ENCODE measurements at regions of chr16 and their contacts with region 1.

Region 1: DNA sequence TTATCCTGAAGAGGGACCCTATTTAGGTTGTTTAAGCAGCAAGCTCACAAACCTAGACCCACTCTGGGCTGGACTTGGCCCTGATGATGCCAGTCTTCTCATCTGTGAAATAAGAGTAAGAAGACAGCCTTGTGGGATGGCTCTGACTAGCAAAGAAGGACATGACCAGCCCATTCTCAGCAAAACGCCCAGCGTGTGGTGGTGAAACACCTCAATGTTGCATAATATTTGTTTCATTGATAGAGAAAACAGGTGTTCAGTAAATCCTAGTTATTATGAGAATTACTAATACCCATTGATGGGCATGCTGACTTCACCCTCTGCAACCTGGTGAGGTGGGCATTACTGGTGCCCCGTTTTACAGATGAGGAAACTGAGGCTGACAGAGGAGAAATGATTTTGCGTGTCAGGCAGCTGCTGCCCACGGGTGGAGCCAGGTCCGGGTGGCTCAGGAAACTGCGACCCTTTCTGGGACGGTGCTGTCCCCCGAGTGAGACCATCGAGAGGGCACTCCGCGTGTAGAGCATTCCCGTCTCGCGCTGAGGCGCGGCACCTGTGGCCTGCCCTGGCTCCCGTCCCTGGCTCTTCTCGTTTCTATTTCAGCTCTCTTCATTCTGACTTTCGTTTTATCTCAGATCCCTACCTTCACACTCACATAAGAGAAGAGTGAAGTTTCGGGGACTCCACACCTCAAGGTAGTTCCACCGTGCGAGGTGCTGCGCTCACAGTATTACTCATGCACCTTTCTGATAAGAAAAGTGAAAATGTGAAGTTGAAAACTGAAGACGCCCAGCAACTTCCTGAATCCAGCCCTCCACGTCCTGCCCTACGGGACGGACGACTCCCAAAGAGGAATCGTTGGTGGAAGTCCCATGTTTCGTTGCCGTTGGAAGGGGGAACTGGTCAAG is 48.5 kb downstream of the IRF8 start:
- DNase-seq: peak; percentile 77
- H3K4me3 Mint-ChIP-seq: peak overlapping the region; percentile 45
- H3K27ac Mint-ChIP-seq: peak overlapping the region; percentile 54
- H3K4me1 Mint-ChIP-seq: peaks cover 49% of the 10 kb centered on the region
- H3K27me3 Mint-ChIP-seq: peaks cover 32% of the 10 kb centered on the region

Region 2: GRCh38 chr16:85879975-85880831 is 67.3 kb before region 1 on chr16:
- CTCF ChIA-PET with region 1: no interaction called
- POLR2A ChIA-PET with region 1: no interaction called
- intact Hi-C with region 1: loop called (anchors 2 kb)
- DNase-seq: no peak
- H3K4me3 Mint-ChIP-seq: no peak overlapping the region
- H3K27ac Mint-ChIP-seq: no peak overlapping the region
- H3K4me1 Mint-ChIP-seq: peaks cover 25% of the 10 kb centered on the region
- H3K27me3 Mint-ChIP-seq: peaks cover 42% of the 10 kb centered on the region

Region 3: DNA sequence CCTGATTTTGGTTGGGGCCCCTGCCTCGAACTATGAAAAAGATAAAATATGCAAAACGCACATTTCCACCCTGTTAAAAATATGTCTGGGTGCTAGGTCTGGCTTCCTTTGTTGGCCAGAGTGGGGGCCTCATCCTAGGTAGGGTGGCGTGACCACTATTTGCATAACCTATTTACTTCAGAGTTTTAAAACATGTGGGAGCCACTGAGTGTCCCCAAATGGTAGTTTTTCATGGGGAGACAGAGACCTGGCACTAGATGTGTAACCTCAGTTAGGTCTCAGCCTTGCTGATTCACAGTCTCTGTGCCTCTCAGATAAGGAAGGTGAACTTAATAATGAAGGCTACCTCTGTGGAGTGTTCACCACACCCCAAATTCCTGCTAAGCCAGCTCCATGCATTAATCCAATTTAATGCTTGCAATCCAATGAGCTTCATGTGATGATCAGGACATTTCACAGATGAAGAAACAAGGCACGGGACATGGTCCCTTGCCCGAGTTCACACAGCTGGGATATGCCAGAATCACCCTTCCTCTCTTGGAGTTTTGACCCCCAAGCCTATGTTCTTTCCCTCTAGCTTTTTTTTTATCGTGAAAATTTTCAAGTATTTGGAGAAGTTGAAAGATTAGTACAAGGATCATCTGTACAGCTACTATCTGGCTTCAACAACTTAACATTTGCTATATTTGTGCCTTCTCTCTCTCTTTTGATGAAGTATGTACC is 54.9 kb after region 1 on chr16:
- CTCF ChIA-PET with region 1: no interaction called
- POLR2A ChIA-PET with region 1: no interaction called
- intact Hi-C with region 1: no loop called
- DNase-seq: no peak
- H3K4me3 Mint-ChIP-seq: no peak overlapping the region
- H3K27ac Mint-ChIP-seq: no peak overlapping the region
- H3K4me1 Mint-ChIP-seq: peaks cover 15% of the 10 kb centered on the region
- H3K27me3 Mint-ChIP-seq: no peaks in the 10 kb centered on the region